Astrocyte of the spinal cord (primary cell): ENCODE measurements at regions of chr10 and their contacts with region 1.

Region 1: DNA sequence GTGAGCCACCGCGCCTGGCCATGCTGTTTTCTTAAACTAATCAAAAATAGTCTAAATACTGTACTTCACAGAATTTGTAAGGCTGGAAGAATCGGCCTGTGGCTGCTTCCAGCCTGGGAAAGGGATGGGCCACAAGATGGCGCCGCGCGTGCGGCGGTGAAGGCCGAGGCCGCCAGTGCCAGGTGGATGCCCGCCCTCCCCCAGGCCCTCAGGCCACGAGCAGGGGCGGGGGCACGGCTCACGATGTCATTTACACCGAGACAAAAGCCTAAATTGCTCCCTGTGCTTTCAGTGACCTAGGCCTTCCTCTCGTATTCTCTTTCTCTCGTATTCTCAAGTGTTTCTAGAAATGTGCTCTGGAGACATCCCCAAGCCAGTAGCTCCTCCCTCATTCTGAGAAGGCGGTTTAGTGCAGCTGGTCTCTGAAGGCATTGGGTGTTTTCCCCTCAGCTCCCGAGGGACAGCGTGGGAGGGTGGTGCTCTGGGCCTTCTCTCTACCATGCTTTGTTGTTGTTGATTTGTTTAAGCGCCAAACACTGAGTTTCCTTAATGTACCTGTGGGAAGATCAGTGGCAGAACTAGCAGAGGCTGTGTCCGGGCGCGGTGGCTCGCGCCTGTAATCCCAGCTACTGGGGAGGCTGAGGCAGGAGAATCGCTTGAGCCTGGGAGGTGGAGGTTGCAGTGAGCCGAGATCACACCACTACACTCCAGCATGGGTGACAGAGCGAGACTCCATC is 68.4 kb downstream of the CDC123 start:
- DNase-seq: peak; percentile 85
- H3K4me3 ChIP-seq: peak overlapping the region; percentile 33
- CTCF ChIP-seq: peak; percentile 88

Region 2: DNA sequence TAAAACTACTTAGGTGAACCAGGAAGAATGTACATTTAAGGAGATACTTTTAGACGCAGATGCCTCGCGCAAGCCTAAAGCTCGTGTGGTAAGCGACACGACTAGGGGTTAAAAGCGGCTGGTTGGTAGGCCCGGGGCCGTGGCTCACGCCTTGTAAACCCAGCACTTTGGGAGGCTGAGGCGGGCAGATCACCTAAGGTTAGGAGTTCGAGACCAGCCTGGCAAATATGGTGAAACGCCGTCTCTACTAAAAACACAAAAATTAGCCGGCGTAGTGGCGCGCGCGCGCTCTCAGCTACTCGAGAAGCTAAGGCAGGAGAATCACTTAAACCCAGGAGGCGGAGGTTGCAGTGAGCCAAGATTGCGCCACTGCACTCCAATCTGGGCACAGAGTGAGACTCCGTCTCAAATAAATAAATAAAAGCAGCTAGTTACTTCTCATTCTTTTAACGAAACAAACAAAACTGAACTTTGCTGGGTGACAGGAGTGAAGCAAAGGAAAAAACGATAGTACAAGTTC is 69.6 kb before region 1 on chr10:
- in situ Hi-C with region 1: no loop called
- DNase-seq: no peak
- H3K4me3 ChIP-seq: peak overlapping the region; percentile 93
- CTCF ChIP-seq: no peak

Region 3: DNA sequence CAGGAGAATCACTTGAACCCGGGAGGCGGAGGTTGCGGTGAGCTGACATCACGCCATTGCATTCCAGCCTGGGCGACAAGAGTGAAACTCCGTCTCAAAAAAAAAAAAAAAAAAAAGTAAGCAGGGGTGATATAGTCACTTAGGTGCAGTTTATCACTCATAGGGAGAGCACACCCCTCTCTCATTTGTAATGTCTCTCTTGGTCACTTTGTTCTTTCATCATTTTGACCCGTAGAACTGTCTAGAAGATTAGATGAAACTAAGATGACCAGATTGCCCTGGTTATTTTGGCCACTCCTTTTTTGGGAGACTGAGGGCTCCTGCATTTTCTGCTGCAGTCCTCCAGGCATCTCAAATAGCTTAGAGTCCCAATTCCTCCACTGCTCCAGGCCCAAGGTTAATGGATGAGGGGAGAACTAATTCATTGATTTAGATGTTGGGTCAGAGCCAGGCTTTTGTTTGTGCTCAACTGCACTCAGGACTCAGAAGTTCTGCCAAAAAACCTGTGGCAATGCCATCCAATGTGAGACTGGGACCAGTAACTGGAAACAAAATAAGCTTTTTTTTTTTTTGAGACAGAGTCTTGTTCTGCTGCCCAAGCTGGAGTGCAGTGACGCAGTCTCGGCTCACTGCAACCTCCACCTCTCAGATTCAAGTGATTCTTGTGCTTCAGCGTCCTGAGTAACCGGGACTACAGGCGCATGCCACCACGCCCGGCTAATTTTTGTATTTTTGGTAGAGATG is 35.0 kb after region 1 on chr10:
- in situ Hi-C with region 1: no loop called
- DNase-seq: no peak
- H3K4me3 ChIP-seq: no peak overlapping the region
- CTCF ChIP-seq: no peak

Region 4: DNA sequence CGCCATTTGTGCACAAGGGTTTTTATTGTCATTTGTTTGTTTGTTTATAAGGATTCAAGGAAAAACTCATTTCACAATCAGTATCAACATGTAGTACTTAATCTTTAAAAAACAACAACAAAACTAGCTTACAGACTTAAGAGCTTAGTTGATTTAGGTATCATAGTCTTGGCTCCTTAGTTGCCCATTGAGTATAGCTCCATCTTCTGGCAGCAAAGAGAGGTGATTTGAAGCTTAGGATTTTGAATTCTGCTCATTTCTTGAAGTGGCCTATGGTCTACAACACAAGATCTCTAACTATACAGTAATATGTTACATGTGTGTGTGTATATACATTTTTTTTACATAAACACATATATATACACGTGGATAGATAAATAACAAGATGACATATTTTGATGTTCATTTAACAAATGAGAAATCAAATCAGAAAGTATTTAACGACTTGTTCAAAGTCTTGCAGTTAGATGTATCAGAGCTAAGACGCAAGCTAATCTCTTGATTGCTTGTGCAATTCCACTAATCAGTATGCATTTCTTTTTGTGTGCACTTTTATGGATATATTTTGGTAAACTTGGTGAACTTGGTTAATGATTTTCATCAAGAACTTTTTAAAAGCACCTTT is 392.3 kb after region 1 on chr10:
- in situ Hi-C with region 1: loop called (anchors 25 kb)
- DNase-seq: peak; percentile 75
- H3K4me3 ChIP-seq: no peak overlapping the region
- CTCF ChIP-seq: peak; percentile 79